ENCODE measurements at regions of chr19 and their contacts with region 1.

Region 1: GRCh38 chr19:57803594-57804325 is 11.0 kb downstream of the ZNF552 start:
- DNase-seq: peak in 1 of 2 experiments; percentile 78
- H3K4me3 ChIP-seq: peak overlapping the region; percentile 49 to 90 (median 74)
- H3K27ac ChIP-seq: peak overlapping the region; percentile 93
- H3K4me1 ChIP-seq: peaks cover 7 to 23% (median 14%) of the 10 kb centered on the region in 4 experiments
- H3K27me3 ChIP-seq: no peaks in the 10 kb centered on the region
- CTCF ChIP-seq: no peak
- EP300 ChIP-seq: peak in 1 of 2 experiments; percentile 70; a peak in 1 of 3 replicates
- POLR2A ChIP-seq: peak in 1 of 2 experiments; percentile 72
- RAD21 ChIP-seq: no peak

Region 2: GRCh38 chr19:57746580-57747471 is 56.9 kb before region 1 on chr19 and contains the start of gene ZNF776:
- CTCF ChIA-PET with region 1: interaction called, 4 read pairs
- POLR2A ChIA-PET with region 1: interaction called, 12 read pairs
- DNase-seq: peak; percentile 43 to 77
- H3K4me3 ChIP-seq: peak within 1 kb of the TSS; percentile 94 to 99 (median 98)
- H3K27ac ChIP-seq: peak within 1 kb of the TSS; percentile 89
- H3K4me1 ChIP-seq: peaks cover 0 to 10% (median 5%) of the 10 kb centered on the region in 4 experiments; a peak in 5 of 7 replicates
- H3K27me3 ChIP-seq: no peaks in the 10 kb centered on the region
- CTCF ChIP-seq: no peak
- EP300 ChIP-seq: no peak
- POLR2A ChIP-seq: peak; percentile 52 to 87
- RAD21 ChIP-seq: no peak
- total RNA-seq, gene ZNF776: 17.3 and 20.5 TPM in 2 replicates

Region 3: DNA sequence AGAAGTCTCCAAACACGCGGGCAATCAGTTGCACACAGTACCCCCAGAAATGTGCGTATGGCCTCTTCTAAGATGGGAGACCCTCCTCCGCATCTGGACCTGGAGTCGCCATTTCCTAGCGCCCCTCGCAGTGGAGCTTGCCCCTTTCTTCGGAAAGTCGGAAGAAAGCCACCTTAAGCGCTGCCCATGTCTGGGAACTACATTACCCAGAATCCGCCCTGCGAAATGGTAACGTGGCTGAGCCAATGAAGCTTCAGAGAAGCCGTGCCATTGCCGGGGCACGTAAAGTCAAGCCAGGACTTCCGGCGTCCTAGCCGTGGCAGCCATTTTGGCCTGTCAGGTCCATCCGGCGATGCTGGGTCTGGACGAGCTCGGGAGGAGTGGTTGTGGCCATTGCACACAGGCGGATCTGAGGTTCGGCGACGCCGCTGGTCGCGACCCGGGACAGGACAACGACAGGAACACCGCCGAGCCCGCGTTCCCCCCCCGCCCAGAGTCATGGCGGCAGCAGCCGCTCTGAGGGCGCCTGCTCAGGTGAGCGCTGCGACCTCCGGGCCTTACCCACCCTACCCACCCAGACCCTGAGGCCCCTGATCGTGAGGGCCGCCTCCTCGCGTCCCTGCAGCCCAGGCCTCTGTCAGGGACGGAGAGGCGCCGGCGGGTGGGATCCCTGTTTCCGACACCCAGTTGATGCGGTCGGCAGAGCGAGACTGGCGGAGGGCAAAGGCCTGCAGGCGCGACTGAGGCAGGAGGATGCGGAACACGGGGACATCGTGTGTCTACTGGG is 34.2 kb before region 1 on chr19 and contains the start of gene ZNF586:
- CTCF ChIA-PET with region 1: no interaction called
- POLR2A ChIA-PET with region 1: interaction called, 13 read pairs
- DNase-seq: peak; percentile 89
- H3K4me3 ChIP-seq: peak within 1 kb of the TSS; percentile 68 to 91 (median 81)
- H3K27ac ChIP-seq: peak within 1 kb of the TSS; percentile 62
- H3K4me1 ChIP-seq: peaks cover 0 to 5% (median 0%) of the 10 kb centered on the region in 4 experiments; a peak in 3 of 7 replicates
- H3K27me3 ChIP-seq: no peaks in the 10 kb centered on the region
- CTCF ChIP-seq: no peak
- EP300 ChIP-seq: no peak
- POLR2A ChIP-seq: peak in 1 of 2 experiments; percentile 66; a peak in 2 of 3 replicates
- RAD21 ChIP-seq: no peak
- total RNA-seq, gene ZNF586: 14.5 and 15.5 TPM in 2 replicates

Region 4: DNA sequence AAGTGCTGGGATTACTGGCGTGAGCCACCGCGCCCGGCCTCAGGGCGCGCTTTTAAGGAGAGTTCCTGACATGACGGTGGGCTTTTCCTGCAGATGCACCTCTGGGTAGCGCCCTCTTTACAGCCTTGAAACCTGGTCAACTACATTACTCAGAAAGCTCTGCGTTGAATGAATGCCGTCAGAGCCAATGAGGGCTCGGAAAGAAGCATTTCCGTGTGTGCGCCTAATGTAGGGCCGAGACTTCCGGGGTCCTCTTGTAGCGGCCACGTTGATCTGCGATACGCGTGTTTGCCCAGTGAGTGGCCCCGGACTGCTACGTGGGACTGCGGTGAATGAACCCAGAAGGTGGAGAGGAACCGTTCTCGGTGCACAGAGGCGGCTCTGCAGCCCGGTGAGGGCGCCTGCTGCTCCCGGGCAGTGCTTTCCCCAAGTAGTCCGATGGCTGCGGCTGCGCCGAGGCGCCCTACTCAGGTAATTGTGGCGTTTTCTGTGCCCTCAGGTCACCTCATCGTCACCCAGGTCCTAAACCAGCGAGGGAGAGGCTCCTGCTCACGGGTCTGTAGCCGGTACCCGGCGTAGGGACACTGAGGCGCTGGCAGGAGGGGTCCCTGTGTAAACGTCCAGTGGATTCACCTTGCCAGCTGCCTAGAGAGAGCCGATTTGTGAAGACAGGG is 15.9 kb after region 1 on chr19:
- CTCF ChIA-PET with region 1: interaction called, 7 read pairs
- POLR2A ChIA-PET with region 1: interaction called, 36 read pairs
- DNase-seq: peak; percentile 63 to 73
- H3K4me3 ChIP-seq: peak overlapping the region; percentile 84 to 99 (median 96)
- H3K27ac ChIP-seq: peak overlapping the region; percentile 80
- H3K4me1 ChIP-seq: peaks cover 3 to 7% (median 5%) of the 10 kb centered on the region in 4 experiments
- H3K27me3 ChIP-seq: no peaks in the 10 kb centered on the region
- CTCF ChIP-seq: 0 out of 4 replicates have a peak, but pooled peaks of 1 of the 3 experiments have one; percentile 1
- EP300 ChIP-seq: no peak
- POLR2A ChIP-seq: peak; percentile 67 to 85
- RAD21 ChIP-seq: no peak

Region 5: DNA sequence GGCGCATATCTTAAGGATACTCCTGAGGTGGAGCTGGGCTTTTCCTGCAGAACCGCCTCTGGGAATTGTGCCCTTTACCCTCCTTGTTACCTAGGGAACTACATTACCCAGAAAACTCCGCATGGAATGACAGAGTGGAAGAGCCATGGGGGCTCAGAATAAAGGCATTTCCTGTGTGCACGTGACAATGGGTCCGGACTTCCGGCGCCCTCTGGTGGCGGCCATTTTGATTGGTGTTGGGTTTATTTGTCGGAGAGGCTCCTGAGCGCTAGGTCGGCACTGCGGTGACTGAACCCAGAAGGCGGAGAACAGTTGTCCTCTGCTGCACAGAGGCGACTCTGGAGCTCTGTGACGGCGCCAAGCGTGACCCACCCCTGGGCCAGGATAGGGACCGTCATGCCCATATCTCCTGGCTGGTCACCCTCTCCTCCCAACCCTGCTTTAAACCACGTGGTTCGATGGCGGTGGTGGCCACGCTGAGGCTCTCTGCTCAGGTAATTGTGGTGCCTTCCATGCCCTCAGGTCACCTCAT is 26.4 kb after region 1 on chr19 and contains the start of gene ZNF587B:
- CTCF ChIA-PET with region 1: interaction called, 4 read pairs
- POLR2A ChIA-PET with region 1: interaction called, 12 read pairs
- DNase-seq: peak; percentile 77 to 92
- H3K4me3 ChIP-seq: peak within 1 kb of the TSS; percentile 73 to 99 (median 94)
- H3K27ac ChIP-seq: peak within 1 kb of the TSS; percentile 96
- H3K4me1 ChIP-seq: peaks cover 0 to 8% (median 5%) of the 10 kb centered on the region in 4 experiments; a peak in 4 of 7 replicates
- H3K27me3 ChIP-seq: no peaks in the 10 kb centered on the region
- CTCF ChIP-seq: peak in 2 of 3 experiments; percentile 8 to 16; a peak in 2 of 4 replicates
- EP300 ChIP-seq: no peak
- POLR2A ChIP-seq: peak; percentile 68 to 95
- RAD21 ChIP-seq: peak in 1 of 2 experiments; percentile 19; a peak in 2 of 4 replicates
- total RNA-seq, gene ZNF587B: 53.7 and 60.1 TPM in 2 replicates

Region 6: DNA sequence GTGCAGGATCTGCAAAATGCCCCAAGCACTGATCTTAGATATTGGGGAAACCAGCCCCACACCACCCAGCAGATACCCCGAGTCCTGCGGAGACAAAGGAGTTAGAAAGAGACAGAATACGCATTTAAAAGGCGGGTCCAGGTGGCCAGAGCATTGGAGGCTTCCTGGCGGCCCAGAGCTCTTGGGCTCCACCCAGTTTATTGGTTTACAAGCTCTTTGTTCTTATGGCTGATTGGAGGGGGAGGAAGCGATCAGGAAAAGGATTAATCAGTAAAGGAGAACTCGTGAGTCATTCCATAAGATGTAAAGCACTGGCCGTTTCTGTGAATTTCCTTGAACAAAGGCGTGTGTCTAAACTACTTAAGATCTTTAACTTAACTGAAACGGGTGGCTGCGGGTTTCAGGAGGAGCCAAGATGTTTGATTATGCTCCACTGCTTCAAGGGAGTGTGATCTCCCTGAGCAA is 46.8 kb after region 1 on chr19:
- CTCF ChIA-PET with region 1: no interaction called
- POLR2A ChIA-PET with region 1: interaction called, 10 read pairs
- DNase-seq: peak in 1 of 2 experiments; percentile 49
- H3K4me3 ChIP-seq: peak overlapping the region; percentile 79 to 81 (median 79)
- H3K27ac ChIP-seq: peak overlapping the region; percentile 83
- H3K4me1 ChIP-seq: peaks cover 0 to 6% (median 4%) of the 10 kb centered on the region in 4 experiments; a peak in 6 of 7 replicates
- H3K27me3 ChIP-seq: no peaks in the 10 kb centered on the region
- CTCF ChIP-seq: no peak
- EP300 ChIP-seq: no peak
- POLR2A ChIP-seq: peak in 1 of 2 experiments; percentile 13; a peak in 1 of 3 replicates
- RAD21 ChIP-seq: no peak

Measured in H1 (cell line).